ENCODE measurements at regions of chr10 and their contacts with region 1.

Region 1: DNA sequence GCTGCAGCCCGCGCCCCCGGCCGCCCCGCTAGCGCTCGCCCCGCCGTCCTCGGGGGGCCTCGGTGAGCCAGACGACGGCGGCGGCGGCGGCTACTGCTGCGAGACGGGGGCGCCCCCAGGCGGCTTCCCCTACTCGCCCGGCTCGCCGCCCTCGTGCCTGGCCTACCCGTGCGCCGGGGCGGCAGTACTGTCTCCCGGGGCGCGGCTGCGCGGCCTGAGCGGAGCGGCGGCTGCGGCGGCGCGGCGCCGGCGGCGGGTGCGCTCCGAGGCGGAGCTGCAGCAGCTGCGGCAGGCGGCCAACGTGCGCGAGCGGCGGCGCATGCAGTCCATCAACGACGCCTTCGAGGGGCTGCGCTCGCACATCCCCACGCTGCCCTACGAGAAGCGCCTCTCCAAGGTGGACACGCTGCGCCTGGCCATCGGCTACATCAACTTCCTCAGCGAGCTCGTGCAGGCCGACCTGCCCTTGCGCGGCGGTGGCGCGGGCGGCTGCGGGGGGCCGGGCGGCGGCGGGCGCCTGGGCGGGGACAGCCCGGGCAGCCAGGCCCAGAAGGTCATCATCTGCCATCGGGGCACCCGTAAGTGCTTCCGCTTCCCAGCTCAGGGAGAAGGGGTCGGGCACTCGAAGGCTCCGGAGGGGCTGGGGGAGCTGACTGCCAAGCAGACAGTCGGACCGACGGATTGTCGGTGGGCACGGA is 774 bp downstream of the PTF1A start:
- DNase-seq: no peak
- ATAC-seq: no peak
- H3K4me3 ChIP-seq: no peak overlapping the region
- H3K27ac ChIP-seq: no peak overlapping the region
- H3K4me1 ChIP-seq: peaks cover 0 to 19% (median 7%) of the 10 kb centered on the region in 9 donors
- H3K27me3 ChIP-seq: peaks cover 30 to 98% (median 94%) of the 10 kb centered on the region in 7 donors
- CTCF ChIP-seq: no peak

Region 2: DNA sequence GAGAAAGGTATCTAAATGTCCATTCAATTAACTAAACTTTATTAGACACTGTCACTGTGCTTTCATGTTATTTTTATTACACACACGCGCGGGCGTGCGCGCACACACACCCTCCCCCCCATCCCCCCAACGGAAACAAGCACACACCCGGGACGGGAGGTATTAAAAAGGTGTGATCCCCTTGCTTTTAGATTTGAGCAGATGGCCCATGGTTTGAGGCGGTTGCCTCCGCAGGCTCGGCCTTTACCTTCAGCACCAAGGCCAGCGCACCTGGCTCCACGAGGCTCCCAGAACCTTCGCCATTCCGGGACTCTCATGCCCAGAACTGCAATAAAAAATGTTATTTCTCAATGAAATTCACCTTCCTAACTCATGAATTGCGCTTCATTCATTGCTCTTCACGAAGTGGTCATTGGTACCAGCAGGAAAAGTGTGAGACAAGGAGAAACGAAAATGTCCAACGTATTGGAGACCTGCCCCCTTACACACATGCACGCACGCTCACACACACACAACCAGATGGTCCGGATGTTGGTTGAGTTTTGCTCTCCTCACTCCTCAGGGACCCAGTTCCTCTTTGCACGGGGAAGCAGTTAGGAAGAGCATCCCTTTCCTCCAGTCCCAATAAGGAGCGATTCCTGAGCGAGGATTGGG is 21.5 kb before region 1 on chr10:
- intact Hi-C with region 1: loop called in 1 of 10 experiments (anchors 1 kb)
- DNase-seq: no peak
- ATAC-seq: no peak
- H3K4me3 ChIP-seq: no peak overlapping the region
- H3K27ac ChIP-seq: no peak overlapping the region
- H3K4me1 ChIP-seq: peaks cover 0 to 20% (median 14%) of the 10 kb centered on the region in 9 donors
- H3K27me3 ChIP-seq: peaks cover 17 to 89% (median 80%) of the 10 kb centered on the region in 7 donors
- CTCF ChIP-seq: no peak

Region 3: GRCh38 chr10:23253780-23254179 is 60.9 kb after region 1 on chr10:
- intact Hi-C with region 1: loop called in 1 of 10 experiments (anchors 2 kb)
- DNase-seq: no peak
- ATAC-seq: no peak
- H3K4me3 ChIP-seq: no peak overlapping the region
- H3K27ac ChIP-seq: no peak overlapping the region
- H3K4me1 ChIP-seq: no peaks in the 10 kb centered on the region
- H3K27me3 ChIP-seq: peaks cover 0 to 3% (median 0%) of the 10 kb centered on the region in 7 donors
- CTCF ChIP-seq: no peak

Region 4: DNA sequence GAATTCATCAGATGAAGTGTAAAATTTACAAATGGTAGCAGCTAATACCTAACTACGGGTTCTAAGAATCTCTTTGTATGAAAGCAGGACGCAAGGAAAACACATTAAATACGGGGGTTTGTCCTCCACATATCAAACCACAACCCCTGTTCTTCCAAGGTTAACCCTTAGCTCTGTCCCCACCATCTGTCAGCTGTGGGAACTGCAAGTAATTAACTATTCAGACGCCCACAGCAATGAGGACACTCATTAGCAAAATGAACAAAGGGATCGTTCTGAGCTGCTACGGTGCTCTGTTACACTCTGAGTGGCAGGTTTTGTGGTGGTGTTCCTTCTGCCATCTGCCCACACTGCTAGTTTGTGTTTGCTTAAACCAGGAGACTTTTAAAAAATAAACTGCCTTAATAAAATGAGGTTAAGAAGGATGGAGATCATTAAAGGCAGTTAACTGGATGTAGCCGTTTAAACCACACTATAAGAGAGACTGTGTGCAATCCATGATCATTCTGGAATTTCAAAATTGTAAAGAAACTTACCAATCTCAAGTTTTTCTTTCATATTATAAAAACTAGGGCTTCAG is 100.3 kb after region 1 on chr10:
- intact Hi-C with region 1: no loop called
- DNase-seq: no peak
- ATAC-seq: no peak
- H3K4me3 ChIP-seq: no peak overlapping the region
- H3K27ac ChIP-seq: no peak overlapping the region
- H3K4me1 ChIP-seq: no peaks in the 10 kb centered on the region
- H3K27me3 ChIP-seq: peaks cover 0 to 25% (median 12%) of the 10 kb centered on the region in 7 donors
- CTCF ChIP-seq: peak in 4 of 9 donors; percentile 19 to 48 (median 38)

Region 5: DNA sequence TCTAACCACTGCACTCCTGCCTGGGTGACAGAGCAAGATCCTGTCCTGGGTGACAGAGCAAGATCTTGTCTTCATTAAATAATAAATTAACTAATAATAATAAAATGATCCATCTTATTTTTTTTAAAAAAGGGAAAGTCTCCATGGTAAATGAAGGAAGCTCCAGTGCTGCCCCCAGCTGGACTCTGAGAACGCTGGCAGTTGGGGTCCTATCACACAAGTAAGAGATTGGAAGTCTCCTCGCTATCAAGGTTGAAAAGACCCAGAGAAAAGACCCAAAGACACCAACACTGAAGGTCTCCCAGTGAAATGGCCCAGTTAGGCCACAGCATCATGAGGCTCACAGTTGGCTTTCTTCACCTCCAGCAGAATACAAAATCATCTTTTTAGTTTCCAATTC is 165.5 kb after region 1 on chr10:
- intact Hi-C with region 1: no loop called
- DNase-seq: no peak
- ATAC-seq: no peak
- H3K4me3 ChIP-seq: no peak overlapping the region
- H3K27ac ChIP-seq: no peak overlapping the region
- H3K4me1 ChIP-seq: peaks cover 0 to 11% (median 0%) of the 10 kb centered on the region in 9 donors
- H3K27me3 ChIP-seq: no peaks in the 10 kb centered on the region
- CTCF ChIP-seq: peak in 5 of 9 donors; percentile 9 to 22 (median 12)